Activated naive CD4-positive, alpha-beta T cell treated with anti-CD3 and anti-CD28 coated beads for 36 hours (primary cell): ENCODE measurements at regions of chr11 and their contacts with region 1.

Region 1: DNA sequence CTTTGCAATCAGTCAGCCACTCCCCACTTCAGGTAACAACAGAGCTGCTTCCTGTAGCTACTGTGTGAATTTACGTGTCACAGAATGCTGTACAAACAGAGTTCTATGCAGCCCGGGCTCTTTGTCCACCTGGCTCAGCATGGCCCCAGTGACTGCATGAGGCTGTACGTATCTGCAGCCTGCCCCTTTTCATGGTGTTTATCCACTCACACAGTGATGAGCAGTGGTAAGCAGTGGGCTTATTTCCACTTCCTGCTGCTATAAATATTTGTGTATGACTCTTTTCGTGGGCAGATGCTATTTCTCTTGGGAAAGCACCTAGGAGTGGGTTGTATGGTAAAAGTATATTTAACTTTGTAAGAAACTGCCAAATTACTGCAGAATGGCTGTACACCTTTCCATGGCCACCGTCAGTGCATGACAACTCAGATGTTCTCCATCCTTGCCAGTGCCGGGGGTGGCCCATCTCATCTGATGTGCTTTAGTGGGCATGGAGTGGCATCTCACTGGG is 43.3 kb downstream of the MYEOV start:
- DNase-seq: peak; percentile 53
- H3K4me3 Mint-ChIP-seq: no peak overlapping the region
- H3K27ac Mint-ChIP-seq: peak overlapping the region; percentile 63
- H3K4me1 Mint-ChIP-seq: peaks cover 42% of the 10 kb centered on the region
- H3K27me3 Mint-ChIP-seq: no peaks in the 10 kb centered on the region

Region 2: DNA sequence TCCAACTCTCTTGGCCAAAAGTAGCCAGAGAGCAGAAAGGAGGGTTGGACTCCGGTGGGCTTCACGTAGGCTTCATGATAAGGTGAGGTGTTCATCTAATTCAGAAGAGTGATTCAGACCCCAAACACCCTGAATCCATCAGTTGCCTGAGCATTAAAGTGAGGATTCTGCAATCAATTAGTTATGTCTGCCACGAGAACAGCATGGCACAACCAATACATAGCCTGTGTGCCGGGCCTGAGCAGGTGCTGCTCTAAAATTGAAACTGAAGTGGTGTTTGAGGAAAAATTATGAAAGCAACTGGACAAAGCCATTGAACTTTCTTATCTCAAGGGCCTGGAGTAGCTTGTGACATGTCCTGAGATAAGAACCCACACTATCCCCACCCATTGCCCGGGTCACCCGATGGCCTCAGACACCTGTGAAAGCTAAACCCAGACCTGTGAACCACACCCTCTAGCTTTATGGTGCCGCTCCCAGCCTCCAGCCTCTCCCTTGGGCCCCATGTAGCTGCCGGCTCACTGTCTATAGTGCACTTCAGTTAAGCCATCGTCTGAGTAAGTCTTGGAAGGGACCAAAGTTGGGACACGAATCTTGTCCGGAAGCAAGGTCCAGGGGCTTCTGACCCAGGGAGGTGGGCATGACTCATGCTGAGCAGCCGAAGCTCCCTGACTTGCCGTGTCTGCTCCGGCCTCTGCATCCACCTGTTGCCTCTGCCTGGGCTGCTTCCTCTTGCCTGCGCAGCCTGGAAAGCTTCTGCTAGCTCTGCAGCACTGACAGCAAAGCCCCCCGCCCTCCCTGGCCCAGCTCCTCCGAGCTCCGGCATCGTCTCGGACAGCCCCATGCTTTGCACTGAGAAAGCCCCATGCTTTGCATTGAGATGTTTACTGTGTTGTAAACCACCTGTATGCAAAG is 49.0 kb before region 1 on chr11:
- CTCF ChIA-PET with region 1: no interaction called
- intact Hi-C with region 1: no loop called
- DNase-seq: no peak
- H3K4me3 Mint-ChIP-seq: no peak overlapping the region
- H3K27ac Mint-ChIP-seq: no peak overlapping the region
- H3K4me1 Mint-ChIP-seq: no peaks in the 10 kb centered on the region
- H3K27me3 Mint-ChIP-seq: no peaks in the 10 kb centered on the region

Region 3: DNA sequence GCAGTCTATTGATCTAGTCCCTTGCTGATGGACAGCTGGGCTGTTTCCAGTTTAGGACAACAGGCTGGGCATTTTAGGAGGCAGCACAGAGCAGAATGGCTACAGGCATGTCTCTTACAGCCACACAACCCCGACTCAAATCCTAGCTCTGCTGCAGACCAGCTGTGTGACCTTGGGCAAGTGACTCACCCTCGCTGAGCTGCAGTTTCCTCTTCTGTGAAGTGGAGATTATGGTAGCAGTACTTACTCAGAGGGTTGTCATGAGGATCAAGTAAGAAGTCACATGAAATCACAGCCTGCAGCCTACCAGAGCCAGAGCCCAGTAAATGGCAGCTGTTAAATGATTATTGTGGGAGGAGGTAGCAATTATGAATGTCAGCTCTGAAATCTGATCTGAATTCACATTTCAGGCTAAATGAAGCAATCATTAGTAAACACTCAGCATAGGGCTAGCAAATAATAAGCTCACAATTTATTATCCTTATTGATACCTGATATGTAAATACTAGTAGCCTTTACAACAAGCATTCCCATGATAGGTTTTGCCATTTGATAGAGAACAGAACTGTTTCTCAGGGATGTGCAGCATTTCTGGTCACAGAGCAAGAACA is 15.6 kb after region 1 on chr11:
- CTCF ChIA-PET with region 1: no interaction called
- intact Hi-C with region 1: loop called (anchors 1 kb)
- DNase-seq: peak; percentile 74
- H3K4me3 Mint-ChIP-seq: no peak overlapping the region
- H3K27ac Mint-ChIP-seq: no peak overlapping the region
- H3K4me1 Mint-ChIP-seq: peaks cover 15% of the 10 kb centered on the region
- H3K27me3 Mint-ChIP-seq: no peaks in the 10 kb centered on the region

Region 4: GRCh38 chr11:69382131-69383128 is 45.2 kb after region 1 on chr11:
- CTCF ChIA-PET with region 1: no interaction called
- intact Hi-C with region 1: no loop called
- DNase-seq: no peak
- H3K4me3 Mint-ChIP-seq: no peak overlapping the region
- H3K27ac Mint-ChIP-seq: no peak overlapping the region
- H3K4me1 Mint-ChIP-seq: no peaks in the 10 kb centered on the region
- H3K27me3 Mint-ChIP-seq: no peaks in the 10 kb centered on the region